Activated CD4-positive, alpha-beta T cell treated with anti-CD3 and anti-CD28 coated beads, Interleukin-2, amount 10 ng/mL, durations not matched to agents 24 days and 14 days (primary cell): ENCODE measurements at regions of chr10 and their contacts with region 1.

Region 1: DNA sequence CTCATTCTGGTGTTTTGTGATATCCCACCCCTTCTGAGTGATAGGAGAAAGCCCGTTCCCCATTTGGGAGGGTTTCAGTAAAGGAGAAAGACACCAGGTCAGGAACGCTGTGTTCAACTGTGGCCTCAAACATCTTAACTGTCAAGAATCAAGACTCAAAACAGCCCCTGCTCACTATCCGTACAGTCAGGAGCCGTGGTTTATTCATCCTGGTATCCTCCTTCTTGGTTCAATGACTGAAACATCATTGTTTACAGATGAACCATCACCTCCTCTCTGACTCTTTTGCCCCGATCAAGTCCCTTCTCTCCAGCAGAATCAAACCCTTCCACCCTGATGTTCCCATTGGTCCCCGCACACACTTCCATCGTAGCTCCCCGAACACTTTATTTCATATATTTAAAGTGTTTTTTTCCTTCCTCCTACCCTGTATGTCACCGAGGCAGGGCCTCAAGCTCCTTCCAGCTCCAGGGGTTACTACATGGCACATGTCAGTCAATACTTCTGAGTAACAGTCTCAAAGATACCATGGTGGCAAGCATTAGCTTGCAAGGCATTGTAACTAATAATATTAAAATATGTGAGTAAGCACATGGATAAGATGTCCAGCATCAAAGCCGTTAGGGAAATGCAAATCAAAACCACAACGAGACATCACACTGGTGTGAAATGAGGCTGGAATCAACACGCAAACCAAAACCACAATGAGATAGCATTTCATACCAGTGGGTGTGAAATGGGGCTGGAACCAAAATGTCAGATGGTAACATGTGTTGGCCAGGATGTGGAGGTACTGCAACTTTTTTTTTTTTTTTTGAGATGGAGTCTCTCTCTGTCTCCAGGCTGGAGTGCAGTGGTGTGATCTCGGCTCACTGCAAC is 124.7 kb upstream of the C1QL3 start:
- DNase-seq: no peak
- H3K4me3 Mint-ChIP-seq: no peak overlapping the region
- H3K27ac Mint-ChIP-seq: peak overlapping the region; percentile 64
- H3K4me1 Mint-ChIP-seq: peaks cover 16% of the 10 kb centered on the region
- H3K27me3 Mint-ChIP-seq: no peaks in the 10 kb centered on the region

Region 2: DNA sequence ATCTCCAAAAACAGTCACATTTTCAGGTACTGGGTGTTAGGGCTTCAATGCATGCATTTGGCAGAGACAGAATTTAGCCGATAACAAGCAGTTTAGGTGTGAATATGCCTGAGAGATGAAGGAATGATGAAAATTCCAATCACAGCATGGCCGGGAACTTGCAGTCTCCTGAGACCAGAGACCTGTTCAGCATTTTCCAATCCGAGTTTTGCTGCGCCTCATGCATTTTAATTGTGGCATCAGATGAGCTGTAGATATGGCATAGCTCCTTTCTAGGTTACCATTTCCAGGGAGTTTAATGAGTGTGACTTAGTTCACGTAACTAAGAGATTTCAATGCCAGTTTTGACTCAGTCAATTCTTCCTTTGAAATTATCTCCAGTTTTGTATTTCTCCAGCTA is 110.3 kb before region 1 on chr10:
- intact Hi-C with region 1: no loop called
- DNase-seq: peak; percentile 33
- H3K4me3 Mint-ChIP-seq: no peak overlapping the region
- H3K27ac Mint-ChIP-seq: no peak overlapping the region
- H3K4me1 Mint-ChIP-seq: no peaks in the 10 kb centered on the region
- H3K27me3 Mint-ChIP-seq: peaks cover 6% of the 10 kb centered on the region

Region 3: DNA sequence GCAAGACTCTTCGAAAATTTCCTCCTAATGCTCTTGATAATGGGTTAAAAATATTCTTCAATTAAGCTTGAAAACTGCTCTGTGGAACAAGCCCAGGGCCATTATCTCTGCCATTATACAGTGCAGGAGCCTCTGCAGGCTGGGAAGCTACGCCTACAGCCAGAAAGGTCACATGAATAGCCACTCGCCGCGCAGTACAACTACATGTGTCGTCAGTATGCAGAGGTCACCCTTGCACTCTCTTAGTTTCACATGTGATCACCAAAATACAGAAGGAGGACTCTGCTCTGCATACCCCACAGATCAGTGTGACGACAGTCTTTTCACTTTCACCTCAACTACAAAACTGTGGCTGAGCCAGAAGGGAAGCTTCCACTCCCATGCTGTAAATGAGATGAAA is 17.0 kb after region 1 on chr10:
- intact Hi-C with region 1: loop called (anchors 2 kb)
- DNase-seq: no peak
- H3K4me3 Mint-ChIP-seq: no peak overlapping the region
- H3K27ac Mint-ChIP-seq: no peak overlapping the region
- H3K4me1 Mint-ChIP-seq: peaks cover 10% of the 10 kb centered on the region
- H3K27me3 Mint-ChIP-seq: no peaks in the 10 kb centered on the region